AG04450 (cell line): ENCODE measurements at regions of chr14 and their contacts with region 1.

Region 1: DNA sequence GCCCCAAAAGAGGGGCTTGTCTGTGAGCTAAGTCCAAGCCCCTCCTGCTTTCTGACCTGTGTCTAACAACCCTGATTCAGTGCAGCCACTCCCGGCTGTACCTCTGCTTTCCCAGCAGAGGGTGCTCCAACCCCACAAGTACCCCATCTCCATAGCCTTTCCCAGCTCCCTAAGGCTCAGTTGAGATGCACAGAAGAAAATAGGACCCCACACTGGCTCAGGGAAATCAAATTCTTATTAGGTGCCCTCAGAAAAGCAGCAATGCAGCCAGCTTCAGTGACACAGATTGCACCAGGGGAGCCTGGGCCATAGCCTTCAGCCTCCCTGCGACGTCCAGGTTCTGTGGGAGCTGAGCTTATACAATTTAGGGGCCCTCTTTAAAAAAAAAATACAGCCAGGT is 49.9 kb downstream of the LRRC74A start:
- DNase-seq: peak; percentile 68
- H3K4me3 ChIP-seq: no peak overlapping the region
- H3K27ac ChIP-seq: no peak overlapping the region
- H3K27me3 ChIP-seq: peaks cover 2% of the 10 kb centered on the region
- CTCF ChIP-seq: peak; percentile 99

Region 2: GRCh38 chr14:76887196-76887595 is 11.1 kb after region 1 on chr14:
- CTCF ChIA-PET with region 1: interaction called, 51 read pairs
- POLR2A ChIA-PET with region 1: no interaction called
- DNase-seq: no peak
- H3K4me3 ChIP-seq: no peak overlapping the region
- H3K27ac ChIP-seq: no peak overlapping the region
- H3K27me3 ChIP-seq: peaks cover 7% of the 10 kb centered on the region
- CTCF ChIP-seq: no peak

Region 3: GRCh38 chr14:76937181-76938091 is 61.4 kb after region 1 on chr14:
- CTCF ChIA-PET with region 1: no interaction called
- POLR2A ChIA-PET with region 1: no interaction called
- DNase-seq: peak; percentile 75
- H3K4me3 ChIP-seq: 0 out of 2 replicates have a peak overlapping the region, but pooled peaks have one; percentile 10
- H3K27ac ChIP-seq: peak overlapping the region; percentile 77
- H3K27me3 ChIP-seq: no peaks in the 10 kb centered on the region
- CTCF ChIP-seq: no peak

Region 4: DNA sequence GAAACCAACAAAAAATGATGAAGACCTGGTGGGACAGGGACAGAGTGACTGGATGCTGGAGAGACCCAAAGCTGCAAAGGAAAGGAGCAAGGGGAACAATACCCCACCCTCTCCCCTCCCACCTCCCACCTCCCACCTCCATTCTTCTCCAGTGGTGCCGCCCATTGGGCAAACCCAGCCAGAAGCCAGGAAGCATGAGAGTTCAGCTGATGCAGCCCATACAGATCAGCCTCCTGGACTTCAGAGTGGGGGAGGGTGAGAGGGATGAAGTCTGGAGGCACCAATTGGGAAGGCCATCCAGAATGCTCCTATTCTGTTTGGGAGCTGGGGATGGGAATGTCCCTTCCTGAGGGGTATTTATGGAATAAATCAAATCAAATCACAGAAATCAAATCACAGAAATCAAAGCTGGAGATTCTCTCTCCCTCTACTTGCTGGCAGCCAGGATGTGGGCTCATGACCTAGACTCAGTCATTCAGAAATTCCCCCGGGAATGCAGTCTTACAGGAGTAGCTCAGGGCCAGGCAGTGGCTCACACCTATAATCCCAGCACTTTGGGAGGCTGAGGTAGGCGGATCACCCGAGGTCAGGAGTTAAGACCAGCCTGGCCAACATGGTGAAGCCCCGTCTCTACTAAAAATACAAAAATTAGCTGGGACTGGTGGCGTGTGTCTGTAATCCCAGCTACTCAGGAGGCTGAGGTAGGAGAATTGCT is 121.3 kb after region 1 on chr14:
- CTCF ChIA-PET with region 1: no interaction called
- POLR2A ChIA-PET with region 1: no interaction called
- DNase-seq: no peak
- H3K4me3 ChIP-seq: no peak overlapping the region
- H3K27ac ChIP-seq: no peak overlapping the region
- H3K27me3 ChIP-seq: no peaks in the 10 kb centered on the region
- CTCF ChIP-seq: no peak

Region 5: DNA sequence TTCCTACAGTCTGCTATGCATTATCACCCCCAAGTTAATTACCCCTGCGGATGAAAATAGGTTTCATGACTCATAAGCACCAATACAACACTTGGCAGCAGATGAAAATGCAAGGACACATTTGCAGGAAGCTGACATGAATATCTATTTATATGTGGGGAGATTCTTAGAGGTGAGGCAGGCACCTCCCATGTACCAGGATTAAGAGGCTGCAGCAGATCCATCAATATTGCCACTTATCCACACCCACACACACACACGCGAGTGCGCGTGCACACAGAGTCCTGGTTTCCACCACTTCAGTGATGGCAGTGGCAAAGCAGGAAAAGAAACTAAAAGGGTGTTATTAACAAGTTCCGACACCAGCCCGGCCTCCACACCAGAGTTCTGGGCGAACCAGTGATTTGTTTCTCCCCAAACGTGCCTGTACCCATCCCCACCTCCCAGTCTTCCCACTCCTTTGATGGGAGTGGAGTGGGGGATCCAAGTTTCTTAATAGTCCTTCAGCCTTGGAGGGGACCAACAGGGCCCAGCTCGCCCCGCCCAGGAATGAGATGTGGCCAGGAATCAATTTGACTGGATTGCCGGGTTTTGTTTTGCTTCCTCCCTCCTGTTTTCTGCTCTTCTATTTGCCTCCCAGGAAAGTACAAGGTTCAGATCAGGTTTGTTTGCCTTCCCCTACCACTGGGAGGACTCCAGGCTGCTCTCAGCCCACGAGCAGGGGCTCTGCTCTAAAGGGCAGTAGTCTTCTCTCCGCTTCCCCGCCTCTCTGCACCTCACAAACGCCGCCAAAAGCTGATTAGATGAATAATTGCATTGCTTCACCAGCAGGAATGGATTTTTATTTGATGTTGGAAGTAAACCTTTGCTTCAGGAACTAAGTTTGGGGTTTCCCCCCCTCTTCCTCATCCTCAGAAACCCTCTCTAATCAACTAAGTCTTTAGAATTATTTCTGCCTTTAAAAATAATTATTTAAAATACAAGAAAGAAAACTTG is 147.2 kb after region 1 on chr14:
- CTCF ChIA-PET with region 1: interaction called, 20 read pairs
- POLR2A ChIA-PET with region 1: interaction called, 8 read pairs
- DNase-seq: no peak
- H3K4me3 ChIP-seq: peak overlapping the region; percentile 94
- H3K27ac ChIP-seq: peak overlapping the region; percentile 39
- H3K27me3 ChIP-seq: no peaks in the 10 kb centered on the region
- CTCF ChIP-seq: peak; percentile 53

Region 6: DNA sequence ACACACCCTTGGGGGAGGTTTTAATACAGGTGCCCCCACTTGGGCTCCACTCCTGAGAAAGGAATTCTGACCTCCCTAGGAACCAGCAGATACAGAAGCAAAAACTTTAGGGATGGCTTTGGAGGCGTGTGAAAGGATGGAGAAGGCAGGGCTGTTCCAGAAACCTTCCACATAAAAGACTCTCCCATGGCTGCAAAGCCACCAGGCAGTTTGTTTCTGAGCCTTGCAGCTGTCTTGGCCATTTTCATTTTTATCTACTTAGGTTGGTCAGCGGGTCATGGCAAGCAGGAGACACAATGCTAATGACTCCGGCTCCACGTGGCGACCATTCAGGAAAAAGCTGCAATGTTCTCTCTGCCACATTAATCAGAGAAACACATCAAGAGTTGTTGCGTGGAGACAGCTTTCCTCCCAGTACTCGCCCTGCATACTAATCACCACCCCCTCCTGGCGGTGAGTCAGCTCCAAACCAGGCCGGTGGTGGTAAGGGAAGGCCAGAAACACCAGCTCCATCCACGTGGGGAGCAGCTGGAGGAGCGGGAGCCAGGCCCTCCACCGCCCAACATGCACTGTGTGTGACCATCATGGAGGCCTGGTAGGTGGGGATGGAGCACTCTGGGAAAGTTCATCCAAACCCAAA is 183.3 kb after region 1 on chr14:
- CTCF ChIA-PET with region 1: interaction called, 524 read pairs
- POLR2A ChIA-PET with region 1: interaction called, 3 read pairs
- DNase-seq: no peak
- H3K4me3 ChIP-seq: no peak overlapping the region
- H3K27ac ChIP-seq: peak overlapping the region; percentile 61
- H3K27me3 ChIP-seq: no peaks in the 10 kb centered on the region
- CTCF ChIP-seq: peak; percentile 33; the same call in 1 of the 2 replicates

Region 7: DNA sequence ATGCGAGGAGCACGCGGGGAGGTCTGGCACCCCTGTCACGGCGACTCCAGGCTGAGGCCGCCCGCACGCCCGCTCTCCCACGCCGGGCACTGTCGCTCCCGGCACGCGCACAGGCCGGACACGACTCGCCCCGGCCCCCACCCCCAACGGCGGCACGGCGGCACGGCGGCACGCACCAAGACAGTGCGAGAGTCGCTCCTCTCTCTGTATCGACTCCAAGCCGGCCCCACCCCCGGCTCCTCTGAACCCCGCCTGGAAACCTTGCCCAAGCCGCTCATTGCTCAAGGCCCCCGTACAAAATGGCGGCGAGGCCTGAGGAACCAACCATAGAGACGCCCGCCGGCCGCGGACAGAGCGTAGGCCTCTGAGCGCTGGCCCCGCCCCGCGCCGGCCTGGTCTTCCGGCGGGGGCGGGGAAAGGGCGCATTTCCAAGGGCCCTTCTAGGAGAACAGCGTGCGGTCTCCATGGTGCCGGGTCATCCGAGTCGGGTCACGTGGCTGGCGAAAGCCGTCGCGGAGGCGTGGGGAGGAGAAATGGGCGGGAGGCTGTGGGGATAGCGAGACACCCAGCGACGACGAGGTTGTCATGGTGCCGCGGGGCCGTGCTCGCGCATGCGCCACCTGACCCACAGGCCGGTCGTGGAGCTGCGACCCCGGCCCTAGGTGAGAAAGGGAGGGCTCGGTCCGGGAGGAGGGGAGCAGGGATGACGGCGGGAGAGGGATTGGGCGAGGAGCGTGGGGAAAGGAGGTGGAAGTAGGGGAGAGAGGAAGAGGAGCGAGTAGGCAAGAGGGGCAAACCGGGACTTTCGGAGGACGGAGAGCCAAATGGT is 221.8 kb after region 1 on chr14 and contains the start of gene CIPC:
- CTCF ChIA-PET with region 1: interaction called, 300 read pairs
- POLR2A ChIA-PET with region 1: no interaction called
- DNase-seq: peak; percentile 96
- H3K4me3 ChIP-seq: peak within 1 kb of the TSS; percentile 99
- H3K27ac ChIP-seq: peak within 1 kb of the TSS; percentile 73
- H3K27me3 ChIP-seq: no peaks in the 10 kb centered on the region
- CTCF ChIP-seq: no peak
- polyA plus RNA-seq, gene CIPC: 8.9 and 9.9 TPM in 2 replicates

Region 8: DNA sequence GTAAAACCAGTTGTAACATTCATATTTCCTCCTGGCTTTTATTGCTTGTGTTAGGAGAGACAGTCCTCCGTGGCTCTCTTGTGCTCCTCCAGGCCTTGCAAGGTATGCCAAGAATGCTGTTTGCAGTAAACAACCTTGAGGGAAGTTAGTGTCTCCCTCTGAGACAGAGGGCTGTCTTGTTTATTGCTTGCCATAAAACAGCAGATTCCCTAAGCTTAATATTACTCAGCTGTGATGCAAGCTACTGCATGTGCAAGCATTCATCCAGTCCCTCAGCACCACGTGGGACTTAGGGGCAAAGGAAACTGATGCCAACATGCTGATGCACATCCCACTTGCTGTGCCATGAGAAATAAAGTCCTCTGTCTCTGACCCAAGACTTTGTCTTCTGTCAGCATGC is 438.0 kb after region 1 on chr14:
- CTCF ChIA-PET with region 1: interaction called, 33 read pairs
- POLR2A ChIA-PET with region 1: no interaction called
- DNase-seq: peak; percentile 76
- H3K4me3 ChIP-seq: no peak overlapping the region
- H3K27ac ChIP-seq: peak overlapping the region; percentile 58
- H3K27me3 ChIP-seq: no peaks in the 10 kb centered on the region
- CTCF ChIP-seq: no peak